Astrocyte of the cerebellum (primary cell): ENCODE measurements at regions of chr17 and their contacts with region 1.

Region 1: GRCh38 chr17:43398724-43399595 is at the start of gene ARL4D:
- DNase-seq: peak; percentile 55
- H3K4me3 ChIP-seq: peak within 1 kb of the TSS; percentile 92
- CTCF ChIP-seq: no peak

Region 2: GRCh38 chr17:43442711-43443110 is 43.8 kb after region 1 on chr17:
- in situ Hi-C with region 1: no loop called
- DNase-seq: peak; percentile 26
- H3K4me3 ChIP-seq: no peak overlapping the region
- CTCF ChIP-seq: no peak

Region 3: DNA sequence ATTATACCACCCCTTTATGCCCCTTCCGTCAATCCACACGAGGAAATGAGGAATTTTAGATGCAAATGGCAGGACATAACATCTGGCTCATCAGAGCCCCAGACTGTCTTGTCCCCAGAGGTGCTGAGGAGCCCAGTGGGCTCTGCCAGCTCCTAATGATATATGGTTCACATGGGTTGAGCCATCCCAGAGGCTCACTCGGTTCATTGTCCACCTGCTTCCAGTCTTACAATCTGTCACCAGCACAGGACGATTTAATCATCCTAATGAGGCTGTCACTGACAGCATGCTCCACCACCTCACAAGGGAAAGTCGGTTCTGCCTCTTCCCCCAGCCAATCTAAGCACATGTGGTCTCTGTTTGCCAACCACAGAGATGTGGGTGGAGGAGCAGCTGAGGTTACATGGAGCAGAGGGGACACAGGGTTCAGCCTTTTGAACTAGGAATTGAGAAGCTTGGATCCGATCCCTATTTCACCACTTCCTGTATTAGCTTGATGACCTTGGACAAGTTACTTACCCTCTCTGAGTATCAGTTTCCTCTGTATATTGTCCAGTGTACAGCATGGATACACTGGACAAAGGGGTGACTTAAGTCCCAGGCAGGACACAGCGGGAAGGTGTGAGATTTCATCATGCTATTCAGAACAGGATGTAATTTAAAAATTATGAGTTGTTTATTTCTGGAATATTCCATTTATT is 57.9 kb after region 1 on chr17:
- in situ Hi-C with region 1: loop called (anchors 5 kb)
- DNase-seq: no peak
- H3K4me3 ChIP-seq: no peak overlapping the region
- CTCF ChIP-seq: no peak